PC-3 (cell line): ENCODE measurements at regions of chr22 and their contacts with region 1.

Region 1: DNA sequence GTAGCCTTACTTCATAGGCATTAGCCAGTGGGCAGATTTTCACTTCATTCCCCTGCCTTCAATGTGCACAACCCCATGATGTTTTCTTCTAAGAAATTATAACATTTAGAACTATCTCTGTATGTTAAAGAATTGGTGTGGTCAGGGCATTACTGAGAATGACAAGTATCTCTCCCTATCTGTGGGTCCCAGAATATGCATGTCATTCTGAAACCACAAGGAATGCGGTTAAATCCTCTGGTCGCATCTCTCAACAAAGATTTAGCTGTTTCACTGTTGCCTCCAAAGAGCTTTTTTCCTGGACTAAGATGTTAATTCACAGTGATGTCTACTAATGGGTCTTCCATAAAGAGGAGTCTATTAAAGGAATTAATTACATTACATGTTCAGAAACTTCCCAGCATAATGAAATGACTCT is 62.7 kb downstream of the LIF start:
- DNase-seq: no peak
- ATAC-seq: no peak
- H3K4me3 ChIP-seq: no peak overlapping the region
- H3K27ac ChIP-seq: no peak overlapping the region
- H3K4me1 ChIP-seq: peaks cover 24% of the 10 kb centered on the region
- H3K27me3 ChIP-seq: no peaks in the 10 kb centered on the region
- CTCF ChIP-seq: no peak

Region 2: DNA sequence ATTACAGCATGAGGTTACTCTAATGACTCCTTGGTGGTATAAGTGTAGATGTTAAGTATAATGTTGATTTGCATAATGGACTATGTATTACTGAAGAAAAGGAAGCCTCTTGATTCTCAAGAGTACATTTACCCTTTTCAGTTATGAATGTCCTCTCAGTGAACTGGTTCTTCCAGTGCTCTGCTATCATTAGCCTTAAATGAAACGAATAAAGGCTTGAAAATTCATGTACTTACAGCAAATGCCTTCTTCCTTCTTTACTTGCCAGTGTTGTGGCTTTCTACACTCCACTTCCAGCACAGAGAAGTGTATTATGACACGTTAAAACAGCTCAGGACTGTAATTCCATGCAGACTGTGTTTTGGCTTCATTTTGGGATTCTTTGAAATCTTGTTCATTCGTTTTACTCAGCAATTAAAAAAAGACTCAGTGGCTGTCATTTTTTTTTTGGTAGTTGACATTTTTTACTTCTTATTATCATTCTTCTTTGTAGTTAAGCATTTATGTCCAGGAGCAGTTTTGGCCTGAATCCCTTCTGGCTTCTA is 204.0 kb before region 1 on chr22:
- CTCF ChIA-PET with region 1: no interaction called
- POLR2A ChIA-PET with region 1: interaction called, 17 read pairs
- intact Hi-C with region 1: no loop called
- DNase-seq: no peak
- ATAC-seq: no peak
- H3K4me3 ChIP-seq: no peak overlapping the region
- H3K27ac ChIP-seq: no peak overlapping the region
- H3K4me1 ChIP-seq: peaks cover 12% of the 10 kb centered on the region
- H3K27me3 ChIP-seq: no peaks in the 10 kb centered on the region
- CTCF ChIP-seq: no peak

Region 3: GRCh38 chr22:30159561-30160353 is 24.1 kb before region 1 on chr22:
- CTCF ChIA-PET with region 1: no interaction called
- POLR2A ChIA-PET with region 1: interaction called, 10 read pairs
- intact Hi-C with region 1: no loop called
- DNase-seq: peak; percentile 67
- ATAC-seq: peak; percentile 56
- H3K4me3 ChIP-seq: no peak overlapping the region
- H3K27ac ChIP-seq: no peak overlapping the region
- H3K4me1 ChIP-seq: peaks cover 11% of the 10 kb centered on the region; the same call in 1 of the 2 replicates
- H3K27me3 ChIP-seq: no peaks in the 10 kb centered on the region
- CTCF ChIP-seq: no peak